Ascending aorta (tissue), 2 donors: ENCODE measurements at regions of chr3 and their contacts with region 1.

Region 1: DNA sequence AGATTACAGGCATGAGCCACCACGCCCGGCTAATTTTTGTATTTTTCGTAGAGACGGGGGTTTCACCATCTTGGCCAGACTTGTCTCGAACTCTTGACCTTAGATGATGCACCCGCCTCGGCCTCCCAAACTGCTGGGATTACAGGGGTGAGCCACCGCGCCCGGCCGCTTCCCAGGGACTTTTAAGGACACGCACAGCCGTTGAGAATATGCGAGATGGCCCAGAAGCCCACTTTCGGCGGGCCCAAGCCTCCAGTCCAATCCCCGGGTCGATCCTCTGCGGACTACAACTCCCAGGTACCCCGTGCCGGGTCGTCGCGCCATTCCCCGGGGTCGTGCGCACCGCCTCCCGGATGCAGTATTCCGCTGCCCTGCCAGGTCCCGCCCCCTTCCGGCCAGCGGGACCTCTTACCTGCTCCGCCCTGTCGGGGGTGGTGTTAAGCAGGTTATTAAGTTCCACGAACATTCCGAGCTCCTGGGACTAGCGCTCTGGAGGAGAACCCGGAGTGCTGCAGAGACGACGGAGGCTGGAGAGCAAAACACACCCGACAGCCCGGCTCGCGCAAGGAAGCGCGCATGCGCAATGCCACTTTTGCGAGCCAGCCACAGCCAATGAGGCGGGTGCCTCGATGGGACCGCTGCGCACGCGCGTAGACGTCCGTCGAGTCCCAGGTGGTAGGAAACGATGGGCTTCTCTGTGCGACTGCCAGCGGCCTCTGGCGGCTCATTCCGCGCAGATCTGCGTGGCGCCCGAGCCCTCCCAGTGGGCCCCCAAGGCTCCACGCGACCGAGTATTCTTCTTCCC is at the start of gene ELP6:
- DNase-seq: peak; percentile 82 to 98
- H3K4me3 ChIP-seq: peak within 1 kb of the TSS; percentile 64 to 85
- H3K27ac ChIP-seq: peak within 1 kb of the TSS; percentile 87 to 94
- H3K4me1 ChIP-seq: peaks cover 0 to 5% of the 10 kb centered on the region in 2 donors
- H3K27me3 ChIP-seq: no peaks in the 10 kb centered on the region
- CTCF ChIP-seq: peak; percentile 8 to 32 (median 30)
- total RNA-seq, gene ELP6: 27.0 TPM

Region 2: DNA sequence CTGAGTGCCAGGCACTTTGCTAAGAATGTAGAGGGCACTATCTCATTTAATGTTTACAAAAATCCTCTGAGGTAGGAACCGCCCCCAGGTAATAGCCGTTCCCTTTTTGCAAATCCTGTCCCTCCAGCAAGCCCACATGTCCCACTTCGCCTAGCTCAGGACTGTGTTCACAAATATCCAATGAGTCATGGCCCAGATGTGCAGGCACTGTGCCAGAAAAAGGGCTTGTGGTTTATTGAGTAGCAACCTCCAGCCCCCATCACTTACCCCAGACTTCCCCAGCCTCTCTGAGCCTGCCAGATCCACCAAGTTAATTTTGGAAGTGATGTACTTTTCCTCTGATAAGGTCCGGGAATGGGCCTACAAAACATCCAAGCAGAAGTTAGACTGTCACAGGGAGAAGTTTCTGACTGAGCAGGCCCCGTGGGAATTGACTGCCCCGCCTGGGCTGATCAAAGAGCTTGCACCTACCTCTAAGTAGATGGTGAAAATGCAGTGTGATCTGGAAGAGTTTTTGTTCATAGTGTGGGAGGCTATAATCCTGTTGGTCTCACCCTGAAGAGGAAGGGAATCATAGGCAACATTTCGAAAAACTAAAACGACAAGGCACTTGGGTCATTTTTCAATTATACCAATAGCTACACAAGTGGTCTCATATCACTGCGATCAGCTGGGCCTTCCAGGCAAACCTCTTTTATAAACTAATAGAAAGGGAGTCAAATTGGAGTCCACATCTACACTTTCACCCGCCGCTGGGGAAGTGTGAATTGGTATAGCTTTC is 246.4 kb before region 1 on chr3:
- intact Hi-C with region 1: no loop called
- DNase-seq: peak; percentile 51 to 83
- H3K4me3 ChIP-seq: no peak overlapping the region
- H3K27ac ChIP-seq: no peak overlapping the region
- H3K4me1 ChIP-seq: peaks cover 0 to 5% of the 10 kb centered on the region in 2 donors
- H3K27me3 ChIP-seq: no peaks in the 10 kb centered on the region
- CTCF ChIP-seq: no peak

Region 3: GRCh38 chr3:47420511-47421484 is 92.5 kb before region 1 on chr3:
- intact Hi-C with region 1: loop called (anchors 1 kb)
- DNase-seq: peak; percentile 63 to 93
- H3K4me3 ChIP-seq: no peak overlapping the region
- H3K27ac ChIP-seq: peak overlapping the region; percentile 65 to 67
- H3K4me1 ChIP-seq: peaks cover 3 to 8% of the 10 kb centered on the region in 2 donors
- H3K27me3 ChIP-seq: no peaks in the 10 kb centered on the region
- CTCF ChIP-seq: peak; percentile 92 to 96 (median 94)

Region 4: GRCh38 chr3:47475570-47476329 is 37.6 kb before region 1 on chr3 and contains the start of gene SCAP:
- intact Hi-C with region 1: loop called (anchors 2 kb)
- DNase-seq: peak; percentile 67 to 96
- H3K4me3 ChIP-seq: peak within 1 kb of the TSS; percentile 84 to 88
- H3K27ac ChIP-seq: peak within 1 kb of the TSS; percentile 81 to 90
- H3K4me1 ChIP-seq: peaks cover 8 to 15% of the 10 kb centered on the region in 2 donors
- H3K27me3 ChIP-seq: no peaks in the 10 kb centered on the region
- CTCF ChIP-seq: peak; percentile 93 to 99 (median 97)
- total RNA-seq, gene SCAP: 155 TPM

Region 5: GRCh38 chr3:47781685-47782445 is 268.5 kb after region 1 on chr3 and contains the start of gene SMARCC1:
- intact Hi-C with region 1: loop called (anchors 1 kb)
- DNase-seq: peak; percentile 89 to 99
- H3K4me3 ChIP-seq: peak within 1 kb of the TSS; percentile 75 to 97
- H3K27ac ChIP-seq: peak within 1 kb of the TSS; percentile 93 to 97
- H3K4me1 ChIP-seq: peaks cover 0 to 18% of the 10 kb centered on the region in 2 donors
- H3K27me3 ChIP-seq: no peaks in the 10 kb centered on the region
- CTCF ChIP-seq: no peak
- total RNA-seq, gene SMARCC1: 24.8 TPM

Region 6: DNA sequence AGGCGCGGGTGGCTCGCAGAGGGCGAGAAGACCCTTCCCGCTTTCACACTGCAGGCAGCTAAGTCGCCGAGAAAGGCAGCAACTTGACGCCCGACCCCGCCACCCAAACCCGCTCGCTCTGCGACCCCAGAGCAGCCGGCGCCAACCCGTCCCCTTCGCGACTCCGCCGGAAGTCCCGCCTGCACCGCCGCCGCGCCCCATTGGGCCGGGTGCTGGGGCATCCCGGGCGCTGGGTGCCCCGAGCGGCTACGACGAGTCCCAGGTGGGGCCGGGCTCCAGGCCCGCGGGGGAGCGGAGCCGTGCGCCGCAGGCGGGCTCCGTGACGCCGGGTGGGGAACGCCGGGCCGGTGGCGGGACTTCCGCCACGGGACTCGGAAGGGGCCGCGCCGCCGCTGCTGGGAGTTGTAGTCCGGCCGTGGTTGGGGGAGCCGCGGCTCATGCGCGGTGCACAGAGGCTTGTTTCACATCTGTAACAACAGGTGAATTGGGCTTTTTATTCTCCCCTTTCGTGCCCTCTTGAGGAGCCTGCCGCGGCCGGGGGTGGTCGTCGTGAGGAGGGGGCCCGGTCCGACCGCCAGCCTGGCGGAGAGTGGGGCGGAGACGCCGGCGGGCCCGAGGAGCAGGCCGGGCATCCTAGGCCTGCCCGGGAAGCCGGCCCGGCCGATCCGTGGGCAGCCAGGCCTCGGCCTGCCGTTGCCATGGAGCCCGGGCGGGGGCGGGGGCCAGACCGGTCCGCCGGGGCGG is 289.6 kb after region 1 on chr3 and contains the start of gene DHX30:
- intact Hi-C with region 1: loop called (anchors 5 kb)
- DNase-seq: peak; percentile 62 to 93
- H3K4me3 ChIP-seq: peak within 1 kb of the TSS; percentile 94 to 97
- H3K27ac ChIP-seq: peak within 1 kb of the TSS; percentile 98 to 99
- H3K4me1 ChIP-seq: peaks cover 12 to 20% of the 10 kb centered on the region in 2 donors
- H3K27me3 ChIP-seq: no peaks in the 10 kb centered on the region
- CTCF ChIP-seq: no peak
- total RNA-seq, gene DHX30: 25.8 TPM